Activated B cell treated with CpG ODN at 0.5 μM for 24 hours (primary cell): ENCODE measurements at regions of chr10 and their contacts with region 1.

Region 1: GRCh38 chr10:115129752-115130151 is 36.6 kb downstream of the ATRNL1 start:
- DNase-seq: no peak
- ATAC-seq: no peak
- H3K4me3 Mint-ChIP-seq: no peak overlapping the region
- H3K27ac Mint-ChIP-seq: no peak overlapping the region
- H3K4me1 Mint-ChIP-seq: no peaks in the 10 kb centered on the region
- H3K27me3 Mint-ChIP-seq: peaks cover 2% of the 10 kb centered on the region
- CTCF ChIP-seq: no peak

Region 2: DNA sequence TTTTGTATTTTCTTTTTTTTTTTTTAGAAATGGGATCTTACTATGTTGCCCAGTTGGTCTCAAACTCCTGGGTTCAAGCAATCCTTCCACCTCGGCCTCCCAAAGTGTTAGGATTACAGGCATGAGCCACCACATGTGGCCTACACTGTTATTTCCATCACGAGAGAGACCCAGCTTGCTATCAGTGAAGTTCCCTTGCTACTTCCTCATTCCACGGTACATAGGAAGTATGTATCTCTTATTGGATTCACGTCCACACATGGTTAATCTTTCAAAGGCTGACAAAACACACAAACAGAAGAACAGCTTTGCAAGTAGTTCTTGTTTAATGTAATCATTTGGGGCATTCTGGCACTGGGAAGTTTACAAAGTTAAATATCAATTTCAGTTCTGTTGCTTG is 1326.8 kb before region 1 on chr10:
- CTCF ChIA-PET with region 1: no interaction called
- POLR2A ChIA-PET with region 1: no interaction called
- intact Hi-C with region 1: loop called (anchors 2 kb)
- DNase-seq: no peak
- ATAC-seq: no peak
- H3K4me3 Mint-ChIP-seq: no peak overlapping the region
- H3K27ac Mint-ChIP-seq: no peak overlapping the region
- H3K4me1 Mint-ChIP-seq: peaks cover 7% of the 10 kb centered on the region
- H3K27me3 Mint-ChIP-seq: peaks cover 3% of the 10 kb centered on the region
- CTCF ChIP-seq: no peak

Region 3: GRCh38 chr10:114694752-114695151 is 435.0 kb before region 1 on chr10:
- CTCF ChIA-PET with region 1: no interaction called
- POLR2A ChIA-PET with region 1: no interaction called
- intact Hi-C with region 1: loop called (anchors 10 kb)
- DNase-seq: no peak
- ATAC-seq: no peak
- H3K4me3 Mint-ChIP-seq: no peak overlapping the region
- H3K27ac Mint-ChIP-seq: no peak overlapping the region
- H3K4me1 Mint-ChIP-seq: no peaks in the 10 kb centered on the region
- H3K27me3 Mint-ChIP-seq: peaks cover 4% of the 10 kb centered on the region
- CTCF ChIP-seq: no peak

Region 4: DNA sequence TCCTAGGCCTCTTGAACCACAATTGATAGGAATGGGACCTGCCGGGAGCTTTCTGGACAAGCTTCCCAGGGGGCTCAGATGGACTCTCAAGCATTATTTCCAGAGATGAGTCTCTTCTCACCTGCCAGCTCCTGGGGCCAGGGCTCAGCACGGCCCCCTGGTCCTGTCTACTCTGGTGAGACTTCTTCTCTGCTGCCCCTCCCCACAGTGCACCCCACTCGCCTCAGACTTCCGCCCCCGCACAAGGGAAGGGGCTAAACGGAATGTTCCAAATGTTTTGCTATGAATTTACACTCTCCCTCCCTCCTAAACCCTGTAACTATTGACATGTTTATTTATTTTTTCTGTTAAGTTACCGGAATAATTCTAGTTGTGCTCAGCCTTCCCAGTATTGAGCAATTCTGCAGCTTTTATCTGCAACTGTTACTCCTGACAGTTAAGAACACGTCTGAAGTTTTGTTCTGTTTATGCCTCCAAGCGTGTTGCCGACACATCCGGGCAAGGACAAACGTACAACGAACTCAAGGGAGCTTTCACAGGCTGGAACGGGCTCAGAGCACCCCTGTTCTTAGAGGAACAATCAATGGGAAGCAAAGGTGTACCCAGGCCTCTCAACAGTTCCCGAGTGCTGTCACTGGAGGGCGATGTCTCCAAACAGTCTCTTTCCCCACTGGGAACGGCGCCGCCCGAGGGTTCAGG is 253.0 kb before region 1 on chr10:
- CTCF ChIA-PET with region 1: interaction called, 8 read pairs
- POLR2A ChIA-PET with region 1: no interaction called
- intact Hi-C with region 1: loop called (anchors 1 kb)
- DNase-seq: no peak
- ATAC-seq: peak; percentile 60
- H3K4me3 Mint-ChIP-seq: no peak overlapping the region
- H3K27ac Mint-ChIP-seq: no peak overlapping the region
- H3K4me1 Mint-ChIP-seq: peaks cover 13% of the 10 kb centered on the region
- H3K27me3 Mint-ChIP-seq: peaks cover 37% of the 10 kb centered on the region
- CTCF ChIP-seq: no peak